ENCODE measurements at regions of chr6 and their contacts with region 1.

Region 1: GRCh38 chr6:71248306-71248765 is 40.3 kb upstream of the OGFRL1 start:
- DNase-seq: peak; percentile 89 to 96 (median 93)
- H3K4me3 ChIP-seq: peak overlapping the region in 1 of 3 experiments; percentile 56
- H3K4me3 Mint-ChIP-seq: peak overlapping the region in 1 of 2 donors; percentile 28
- H3K27ac ChIP-seq: peak overlapping the region; percentile 57 to 82
- H3K27ac Mint-ChIP-seq: peak overlapping the region; percentile 87 to 99 (median 96)
- H3K4me1 ChIP-seq: peaks cover 49 to 75% of the 10 kb centered on the region in 2 donors
- H3K4me1 Mint-ChIP-seq: peaks cover 60% of the 10 kb centered on the region
- H3K27me3 ChIP-seq: no peaks in the 10 kb centered on the region
- H3K27me3 Mint-ChIP-seq: peaks cover 0 to 5% (median 0%) of the 10 kb centered on the region in 3 donors
- CTCF ChIP-seq: no peak

Region 2: DNA sequence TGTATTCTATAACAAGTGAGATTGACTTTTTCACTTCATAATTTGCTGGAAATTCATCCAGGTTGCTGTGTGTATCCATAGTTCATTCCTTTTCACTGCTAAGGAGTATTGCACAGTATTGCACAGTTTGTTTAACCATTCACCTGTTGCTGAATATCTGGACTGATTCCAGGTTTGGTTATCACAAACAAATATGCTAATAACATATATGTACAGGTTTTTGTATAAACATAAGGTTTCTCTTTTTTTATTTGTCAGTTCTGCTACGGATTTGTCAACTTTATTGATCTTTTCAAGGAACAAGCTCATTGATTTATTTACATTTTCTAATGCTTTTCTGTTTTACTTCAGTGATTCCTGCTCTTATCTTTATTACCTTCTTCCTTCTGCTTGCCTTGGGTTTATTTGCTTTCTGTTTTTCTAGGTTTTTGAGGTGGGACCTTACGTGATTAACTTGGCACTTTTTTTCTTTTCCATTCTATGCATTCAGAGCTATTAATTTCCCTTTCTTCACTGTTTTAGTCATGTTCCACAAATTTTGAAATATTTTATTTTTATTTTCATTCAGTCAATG is 76.8 kb before region 1 on chr6:
- intact Hi-C with region 1: no loop called
- DNase-seq: no peak
- H3K4me3 ChIP-seq: no peak overlapping the region
- H3K4me3 Mint-ChIP-seq: no peak overlapping the region
- H3K27ac ChIP-seq: no peak overlapping the region
- H3K27ac Mint-ChIP-seq: no peak overlapping the region
- H3K4me1 ChIP-seq: no peaks in the 10 kb centered on the region
- H3K4me1 Mint-ChIP-seq: no peaks in the 10 kb centered on the region
- H3K27me3 ChIP-seq: no peaks in the 10 kb centered on the region
- H3K27me3 Mint-ChIP-seq: no peaks in the 10 kb centered on the region
- CTCF ChIP-seq: no peak

Region 3: DNA sequence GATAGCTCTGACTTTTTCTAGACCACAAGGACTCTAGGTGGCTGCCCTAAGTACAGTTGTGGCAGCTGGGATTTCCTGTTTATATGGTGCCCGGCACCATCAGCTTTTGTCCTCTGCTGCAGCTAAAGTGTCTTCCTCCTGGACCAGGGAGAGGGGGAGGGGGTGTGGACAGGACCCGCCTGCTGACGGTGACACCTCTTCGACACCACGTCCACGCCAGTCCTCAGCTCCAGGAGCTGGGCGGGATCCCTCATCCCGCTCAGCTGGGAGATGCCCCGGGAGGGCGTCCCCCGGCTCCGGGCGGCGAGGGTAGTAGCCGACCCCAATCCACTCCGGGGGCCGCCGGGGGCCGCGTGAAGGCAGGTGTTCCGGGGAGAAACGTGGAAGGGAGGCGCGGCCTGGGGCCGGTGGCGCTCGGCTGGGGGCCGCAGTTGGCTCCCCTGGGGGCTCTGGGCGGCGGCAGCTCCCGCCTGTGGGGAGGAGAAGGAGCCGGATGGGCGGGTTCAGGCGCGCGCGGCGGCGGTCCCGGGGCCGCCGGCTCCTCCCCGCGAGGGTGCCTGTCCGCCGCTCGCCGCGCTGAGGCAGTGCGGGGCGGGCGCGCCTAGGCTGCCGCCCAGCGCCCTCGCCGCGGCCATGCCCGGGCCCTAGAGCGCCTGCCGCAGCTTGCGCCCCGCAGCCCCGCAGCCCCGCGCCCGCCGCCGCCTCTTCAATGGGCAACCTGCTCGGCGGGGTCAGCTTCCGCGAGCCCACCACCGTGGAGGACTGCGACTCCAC is 40.1 kb after region 1 on chr6 and contains the start of gene OGFRL1:
- intact Hi-C with region 1: loop called (anchors 1 to 5 kb)
- DNase-seq: peak; percentile 60 to 72 (median 72)
- H3K4me3 ChIP-seq: peak within 1 kb of the TSS; percentile 62 to 92 (median 87)
- H3K4me3 Mint-ChIP-seq: peak within 1 kb of the TSS; percentile 90 to 95
- H3K27ac ChIP-seq: peak within 1 kb of the TSS; percentile 90 to 97
- H3K27ac Mint-ChIP-seq: peak within 1 kb of the TSS; percentile 92 to 98 (median 96)
- H3K4me1 ChIP-seq: peaks cover 45 to 60% of the 10 kb centered on the region in 2 donors
- H3K4me1 Mint-ChIP-seq: peaks cover 52% of the 10 kb centered on the region
- H3K27me3 ChIP-seq: no peaks in the 10 kb centered on the region
- H3K27me3 Mint-ChIP-seq: no peaks in the 10 kb centered on the region
- CTCF ChIP-seq: no peak
- polyA plus RNA-seq, gene OGFRL1: 52.9 to 72.8 (median 58.3) TPM

Region 4: DNA sequence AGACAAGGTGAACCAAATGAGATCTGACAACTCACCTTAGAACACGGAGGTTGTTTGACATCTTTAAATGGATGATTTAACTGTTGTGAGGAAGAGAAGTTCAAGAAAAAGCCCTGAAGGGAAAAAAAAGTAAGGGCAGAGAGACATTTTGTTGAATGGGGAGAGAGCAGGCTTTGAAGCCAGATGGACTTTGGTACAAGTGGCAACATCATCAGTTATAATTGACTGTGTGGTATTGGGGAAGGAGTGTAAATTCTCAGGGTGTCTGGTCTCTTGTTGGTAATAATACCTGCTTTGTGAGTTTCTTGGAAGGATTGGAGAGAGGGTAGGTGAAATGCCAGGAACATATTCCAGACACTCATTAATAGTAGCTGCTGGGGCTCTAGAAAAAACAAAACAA is 61.9 kb after region 1 on chr6:
- intact Hi-C with region 1: no loop called
- DNase-seq: no peak
- H3K4me3 ChIP-seq: no peak overlapping the region
- H3K4me3 Mint-ChIP-seq: no peak overlapping the region
- H3K27ac ChIP-seq: no peak overlapping the region
- H3K27ac Mint-ChIP-seq: peak overlapping the region in 1 of 7 donors; percentile 7
- H3K4me1 ChIP-seq: no peaks in the 10 kb centered on the region
- H3K4me1 Mint-ChIP-seq: peaks cover 8% of the 10 kb centered on the region
- H3K27me3 ChIP-seq: no peaks in the 10 kb centered on the region
- H3K27me3 Mint-ChIP-seq: peaks cover 0 to 1% (median 0%) of the 10 kb centered on the region in 3 donors
- CTCF ChIP-seq: no peak

Measured in CD14-positive monocyte (primary cell).